Gastrocnemius medialis (tissue), 4 donors: ENCODE measurements at regions of chr1 and their contacts with region 1.

Region 1: DNA sequence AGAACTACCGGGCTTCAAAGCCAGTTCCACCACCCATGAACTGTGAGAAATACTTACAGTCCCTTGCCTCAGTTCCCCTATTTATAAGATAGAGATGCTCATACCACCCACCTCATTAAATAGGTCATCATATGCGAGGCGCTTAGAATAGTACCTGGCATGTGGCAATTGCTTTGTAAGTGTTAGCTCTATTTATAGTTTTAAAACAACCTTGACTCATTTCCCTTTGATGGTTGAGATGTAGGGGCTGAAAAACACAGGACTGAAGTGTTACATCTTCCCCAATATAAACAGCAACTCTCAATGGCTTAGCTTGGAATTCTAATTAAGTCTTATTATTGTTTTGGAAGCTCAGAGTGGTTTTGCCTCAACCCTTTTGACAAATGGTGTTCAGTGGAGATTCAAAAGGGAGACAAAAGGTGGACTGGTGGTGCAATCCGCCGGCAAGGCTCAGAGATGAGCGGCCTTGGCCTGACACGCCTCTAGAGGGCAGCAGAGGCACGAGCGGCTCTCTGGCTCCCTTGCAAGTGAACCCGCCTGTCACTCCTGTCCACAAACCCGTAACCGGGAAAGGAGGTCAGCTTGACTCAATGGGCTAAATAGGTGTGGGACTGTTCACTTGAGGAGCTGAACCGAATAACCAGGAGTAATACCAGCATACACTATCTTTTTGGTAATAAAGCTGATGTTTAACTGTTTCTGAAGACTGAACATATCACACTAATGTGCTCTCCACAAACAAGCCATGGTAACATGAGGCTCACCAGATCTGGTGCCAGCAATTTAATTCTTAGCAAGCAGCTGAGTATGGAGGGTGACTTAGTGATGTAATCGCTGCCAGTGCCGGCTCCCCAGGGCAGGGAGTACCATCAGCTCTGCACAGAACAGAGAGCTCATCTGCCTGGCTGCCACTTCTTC is 19.5 kb upstream of the SMYD2 start:
- DNase-seq: peak; percentile 84 to 91
- ATAC-seq: peak; percentile 89 to 92
- H3K4me3 ChIP-seq: peak overlapping the region; percentile 28 to 52 (median 35)
- H3K27ac ChIP-seq: peak overlapping the region; percentile 79 to 89 (median 86)
- H3K4me1 ChIP-seq: peaks cover 17 to 30% of the 10 kb centered on the region in 2 donors
- H3K27me3 ChIP-seq: no peaks in the 10 kb centered on the region
- CTCF ChIP-seq: peak; percentile 90 to 98 (median 97)
- POLR2A ChIP-seq: no peak

Region 2: DNA sequence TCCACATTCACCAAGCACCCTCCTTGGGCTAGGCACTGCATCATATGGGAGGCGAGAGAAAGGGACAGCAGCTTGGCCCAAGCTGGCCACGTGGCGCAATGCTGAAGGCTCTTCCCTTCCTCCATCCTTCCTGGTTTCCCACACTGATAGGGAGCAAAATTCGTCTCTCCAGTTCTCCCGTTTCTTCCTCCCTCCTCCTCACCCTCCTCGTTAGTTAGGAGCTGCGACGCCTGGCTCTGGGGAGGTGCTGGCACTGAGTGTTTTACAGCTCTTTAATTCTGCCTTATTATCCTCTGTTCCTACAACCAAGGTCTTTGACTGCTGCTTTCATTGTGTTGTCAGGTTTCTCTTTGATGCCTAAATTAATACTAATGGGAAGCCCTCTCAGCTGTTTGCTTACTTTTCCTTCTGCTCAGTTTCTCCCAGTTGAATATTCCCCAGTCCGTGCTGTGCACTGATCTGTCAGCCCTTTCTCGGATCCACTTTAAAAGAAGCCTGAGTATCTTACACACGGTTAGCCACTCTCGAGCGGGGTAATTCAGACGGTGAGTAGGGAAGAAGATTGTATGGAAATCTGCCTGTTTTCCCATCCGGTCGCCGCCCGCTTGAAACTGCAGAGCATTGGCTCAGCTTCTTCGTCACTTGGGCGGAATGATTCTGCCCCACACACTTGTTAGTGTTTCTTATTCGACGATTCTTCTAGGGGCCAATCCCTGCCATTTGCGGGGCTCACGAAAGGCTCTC is 36.7 kb before region 1 on chr1:
- in situ Hi-C with region 1: no loop called
- intact Hi-C with region 1: loop called (anchors 2 kb)
- DNase-seq: no peak
- ATAC-seq: no peak
- H3K4me3 ChIP-seq: peak overlapping the region; percentile 36 to 44 (median 41)
- H3K27ac ChIP-seq: peak overlapping the region; percentile 44 to 70 (median 62)
- H3K4me1 ChIP-seq: peaks cover 23 to 27% of the 10 kb centered on the region in 2 donors
- H3K27me3 ChIP-seq: no peaks in the 10 kb centered on the region
- CTCF ChIP-seq: no peak
- POLR2A ChIP-seq: no peak

Region 3: GRCh38 chr1:214296860-214297745 is 35.6 kb after region 1 on chr1:
- in situ Hi-C with region 1: no loop called
- intact Hi-C with region 1: loop called (anchors 5 kb)
- DNase-seq: no peak
- ATAC-seq: peak; percentile 94 to 97
- H3K4me3 ChIP-seq: peak overlapping the region in 3 of 4 donors; percentile 5 to 12 (median 11)
- H3K27ac ChIP-seq: peak overlapping the region; percentile 51 to 79 (median 65)
- H3K4me1 ChIP-seq: peaks cover 24 to 34% of the 10 kb centered on the region in 2 donors
- H3K27me3 ChIP-seq: no peaks in the 10 kb centered on the region
- CTCF ChIP-seq: no peak
- POLR2A ChIP-seq: no peak

Region 4: GRCh38 chr1:214321705-214322453 is 60.4 kb after region 1 on chr1:
- in situ Hi-C with region 1: loop called in 3 of 4 experiments (anchors 5 kb)
- intact Hi-C with region 1: no loop called
- DNase-seq: no peak
- ATAC-seq: no peak
- H3K4me3 ChIP-seq: no peak overlapping the region
- H3K27ac ChIP-seq: no peak overlapping the region
- H3K4me1 ChIP-seq: peaks cover 13 to 14% of the 10 kb centered on the region in 2 donors
- H3K27me3 ChIP-seq: no peaks in the 10 kb centered on the region
- CTCF ChIP-seq: no peak
- POLR2A ChIP-seq: no peak

Region 5: DNA sequence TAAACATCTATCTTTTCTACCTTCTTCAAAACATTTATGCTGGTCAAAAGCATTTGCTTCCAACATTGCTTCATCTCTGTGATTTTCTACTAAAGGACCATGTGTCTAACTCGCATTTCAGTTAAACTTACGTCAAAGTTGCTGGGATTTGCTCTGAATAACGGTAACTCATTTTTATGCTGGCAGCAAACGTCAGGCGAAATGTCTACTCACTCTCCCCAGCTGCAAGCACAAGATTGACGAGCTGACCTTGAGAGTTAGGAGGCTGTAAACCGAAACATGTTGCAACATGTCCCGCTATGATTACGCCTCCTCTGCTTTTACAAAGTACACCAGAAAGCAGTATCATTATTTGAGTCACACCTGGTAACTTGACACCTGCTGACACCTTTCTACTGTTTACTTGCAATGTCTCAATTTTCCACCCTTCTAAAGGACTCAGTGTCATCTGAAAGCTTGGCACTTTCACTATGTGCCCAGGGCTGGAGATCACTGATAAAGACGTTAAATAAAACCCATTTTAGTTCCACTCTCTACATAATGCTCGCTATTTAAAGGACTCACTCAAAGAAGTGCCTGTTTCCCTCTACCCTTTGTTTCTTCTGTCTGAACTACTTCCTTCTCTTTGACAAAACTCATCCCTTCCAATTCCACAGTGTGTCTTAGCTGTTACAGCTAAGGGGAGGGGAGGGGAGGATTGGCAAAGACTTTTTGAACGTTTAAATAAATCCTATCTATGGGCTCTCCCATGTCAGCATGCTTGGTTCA is 178.1 kb after region 1 on chr1:
- in situ Hi-C with region 1: no loop called
- intact Hi-C with region 1: loop called (anchors 5 kb)
- DNase-seq: peak; percentile 86 to 88
- ATAC-seq: peak; percentile 91 to 93
- H3K4me3 ChIP-seq: peak overlapping the region; percentile 11 to 31 (median 20)
- H3K27ac ChIP-seq: peak overlapping the region; percentile 80 to 93 (median 87)
- H3K4me1 ChIP-seq: peaks cover 46 to 61% of the 10 kb centered on the region in 2 donors
- H3K27me3 ChIP-seq: no peaks in the 10 kb centered on the region
- CTCF ChIP-seq: no peak
- POLR2A ChIP-seq: peak in 1 of 2 donors; percentile 37